ENCODE measurements at regions of chr1 and their contacts with region 1.

Region 1: GRCh38 chr1:182709855-182710254 is 25.5 kb upstream of the RGS8 start:
- DNase-seq: no peak
- H3K4me3 ChIP-seq: no peak overlapping the region
- H3K27ac ChIP-seq: no peak overlapping the region
- H3K4me1 ChIP-seq: peaks cover 2% of the 10 kb centered on the region
- H3K27me3 ChIP-seq: no peaks in the 10 kb centered on the region
- CTCF ChIP-seq: no peak
- EP300 ChIP-seq: no peak
- POLR2A ChIP-seq: no peak

Region 2: GRCh38 chr1:182303778-182304177 is 406.1 kb before region 1 on chr1:
- intact Hi-C with region 1: no loop called
- DNase-seq: no peak
- H3K4me3 ChIP-seq: no peak overlapping the region
- H3K27ac ChIP-seq: peak overlapping the region in 1 of 2 donors; percentile 5
- H3K4me1 ChIP-seq: peaks cover 10% of the 10 kb centered on the region
- H3K27me3 ChIP-seq: no peaks in the 10 kb centered on the region
- CTCF ChIP-seq: no peak
- EP300 ChIP-seq: no peak
- POLR2A ChIP-seq: no peak

Region 3: GRCh38 chr1:182752077-182752988 is 42.5 kb after region 1 on chr1:
- intact Hi-C with region 1: loop called in 1 of 4 experiments (anchors 2 kb)
- DNase-seq: no peak
- H3K4me3 ChIP-seq: no peak overlapping the region
- H3K27ac ChIP-seq: no peak overlapping the region
- H3K4me1 ChIP-seq: no peaks in the 10 kb centered on the region
- H3K27me3 ChIP-seq: no peaks in the 10 kb centered on the region
- CTCF ChIP-seq: no peak
- EP300 ChIP-seq: no peak
- POLR2A ChIP-seq: no peak